GM12878 (cell line): ENCODE measurements at regions of chr10 and their contacts with region 1.

Region 1: DNA sequence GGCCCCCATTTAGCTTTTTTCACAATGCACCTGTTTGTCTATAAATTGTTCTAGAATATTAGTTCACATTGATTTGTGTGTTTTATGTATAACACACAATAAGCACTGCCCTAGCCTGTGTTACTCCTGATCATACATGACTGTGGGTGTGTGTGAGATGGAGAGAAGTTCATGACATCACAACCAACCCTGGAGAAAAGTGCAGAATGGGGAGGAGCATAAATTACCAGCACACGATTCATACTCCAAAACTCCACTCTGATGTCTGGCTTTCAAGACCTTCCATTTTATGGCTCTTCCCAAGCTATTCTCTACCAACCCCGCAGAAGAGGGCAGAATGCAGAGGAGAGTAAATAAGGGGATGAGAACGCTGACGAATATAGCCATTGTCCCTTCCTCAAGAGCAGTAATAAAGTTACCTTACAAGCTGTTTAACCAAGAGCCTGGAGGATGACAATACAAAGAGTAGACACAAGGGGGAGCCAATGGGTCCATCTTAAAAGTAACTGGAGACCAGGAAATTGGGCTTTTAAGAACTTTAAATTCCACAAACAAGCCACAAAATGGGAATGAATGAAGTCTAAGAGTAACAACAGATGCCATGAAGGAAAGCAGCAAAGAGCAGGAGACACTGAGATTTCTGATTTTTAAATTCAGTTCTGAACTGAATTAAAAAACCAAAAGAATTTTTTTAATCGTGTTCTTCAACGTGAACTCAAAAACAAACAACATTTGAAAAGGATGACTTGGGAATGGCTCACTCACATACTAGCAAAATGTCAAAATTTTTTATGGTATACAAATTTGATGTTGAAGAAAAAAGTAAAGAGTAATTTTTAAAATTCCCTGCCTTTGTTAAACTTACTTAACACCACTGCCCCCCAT is 159.6 kb downstream of the PARD3 start:
- DNase-seq: no peak
- ATAC-seq: peak; percentile 71
- H3K4me3 ChIP-seq: no peak overlapping the region
- H3K27ac ChIP-seq: no peak overlapping the region
- H3K4me1 ChIP-seq: no peaks in the 10 kb centered on the region
- H3K27me3 ChIP-seq: no peaks in the 10 kb centered on the region
- CTCF ChIP-seq: peak; percentile 57 to 70 (median 66)
- EP300 ChIP-seq: no peak
- POLR2A ChIP-seq: no peak
- RAD21 ChIP-seq: peak; percentile 56

Region 2: DNA sequence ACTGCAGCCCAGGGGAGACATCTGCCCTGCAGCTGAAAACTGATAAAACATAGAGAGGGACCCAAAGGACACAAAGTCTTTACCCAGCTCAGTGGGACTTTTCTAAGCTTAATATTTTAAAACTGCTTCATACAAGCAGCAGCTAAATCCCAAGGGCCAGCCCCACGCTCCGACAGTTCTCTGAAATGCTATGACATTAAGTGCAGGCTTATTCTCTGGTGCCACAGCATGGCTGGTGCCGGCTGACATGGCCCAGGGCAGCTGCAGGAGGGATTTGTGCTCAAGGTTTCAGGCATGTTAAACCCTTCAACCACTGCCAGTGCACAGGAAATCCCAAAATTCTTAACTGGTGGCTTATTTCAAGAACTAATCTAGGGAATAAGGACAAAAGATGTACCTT is 11.3 kb before region 1 on chr10:
- CTCF ChIA-PET with region 1: interaction called, 25 read pairs
- POLR2A ChIA-PET with region 1: no interaction called
- RAD21 ChIA-PET with region 1: no interaction called
- SMC1A ChIA-PET with region 1: interaction called, 11 read pairs
- in situ Hi-C with region 1: no loop called
- intact Hi-C with region 1: no loop called
- DNase-seq: no peak
- ATAC-seq: no peak; the same call in 2 of the 3 replicates
- H3K4me3 ChIP-seq: no peak overlapping the region
- H3K27ac ChIP-seq: no peak overlapping the region
- H3K4me1 ChIP-seq: no peaks in the 10 kb centered on the region
- H3K27me3 ChIP-seq: no peaks in the 10 kb centered on the region
- CTCF ChIP-seq: no peak
- EP300 ChIP-seq: no peak
- POLR2A ChIP-seq: no peak
- RAD21 ChIP-seq: no peak

Region 3: DNA sequence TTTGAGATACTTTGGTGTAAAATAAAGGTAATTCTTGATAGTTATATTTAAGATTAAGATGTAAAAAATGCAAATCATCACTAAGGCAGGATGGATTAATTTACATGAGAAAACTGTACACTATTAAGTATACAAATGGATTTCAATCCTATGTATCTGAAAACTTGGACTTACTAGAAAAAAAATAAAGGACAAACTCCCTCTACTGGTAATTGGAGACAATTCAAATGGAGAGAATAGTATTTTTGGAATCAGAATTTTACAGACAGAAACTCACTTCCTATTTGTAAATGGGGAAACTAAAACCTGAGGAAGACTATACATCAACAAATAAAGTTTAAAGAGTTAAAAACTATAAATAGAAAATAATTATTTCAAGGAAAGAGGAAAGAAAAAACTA is 372.0 kb after region 1 on chr10:
- CTCF ChIA-PET with region 1: interaction called, 14 read pairs
- POLR2A ChIA-PET with region 1: no interaction called
- RAD21 ChIA-PET with region 1: no interaction called
- SMC1A ChIA-PET with region 1: interaction called, 6 read pairs
- in situ Hi-C with region 1: no loop called
- intact Hi-C with region 1: no loop called
- DNase-seq: no peak
- ATAC-seq: no peak
- H3K4me3 ChIP-seq: no peak overlapping the region
- H3K27ac ChIP-seq: no peak overlapping the region
- H3K4me1 ChIP-seq: no peaks in the 10 kb centered on the region
- H3K27me3 ChIP-seq: no peaks in the 10 kb centered on the region
- CTCF ChIP-seq: no peak; a peak in 2 of 6 replicates
- EP300 ChIP-seq: no peak
- POLR2A ChIP-seq: no peak
- RAD21 ChIP-seq: no peak